Mammary epithelial cell (primary cell): ENCODE measurements at regions of chr17 and their contacts with region 1.

Region 1: GRCh38 chr17:66799849-66800537 is 34.9 kb upstream of the CACNG5 start:
- DNase-seq: no peak
- H3K4me3 ChIP-seq: no peak overlapping the region
- H3K27ac ChIP-seq: no peak overlapping the region
- H3K4me1 ChIP-seq: no peaks in the 10 kb centered on the region
- H3K27me3 ChIP-seq: no peaks in the 10 kb centered on the region
- CTCF ChIP-seq: no peak

Region 2: GRCh38 chr17:66667491-66668030 is 132.4 kb before region 1 on chr17:
- CTCF ChIA-PET with region 1: no interaction called
- dilution Hi-C with region 1: no loop called
- in situ Hi-C with region 1: no loop called
- intact Hi-C with region 1: no loop called
- DNase-seq: no peak
- H3K4me3 ChIP-seq: no peak overlapping the region
- H3K27ac ChIP-seq: no peak overlapping the region
- H3K4me1 ChIP-seq: peaks cover 8% of the 10 kb centered on the region
- H3K27me3 ChIP-seq: no peaks in the 10 kb centered on the region
- CTCF ChIP-seq: no peak

Region 3: DNA sequence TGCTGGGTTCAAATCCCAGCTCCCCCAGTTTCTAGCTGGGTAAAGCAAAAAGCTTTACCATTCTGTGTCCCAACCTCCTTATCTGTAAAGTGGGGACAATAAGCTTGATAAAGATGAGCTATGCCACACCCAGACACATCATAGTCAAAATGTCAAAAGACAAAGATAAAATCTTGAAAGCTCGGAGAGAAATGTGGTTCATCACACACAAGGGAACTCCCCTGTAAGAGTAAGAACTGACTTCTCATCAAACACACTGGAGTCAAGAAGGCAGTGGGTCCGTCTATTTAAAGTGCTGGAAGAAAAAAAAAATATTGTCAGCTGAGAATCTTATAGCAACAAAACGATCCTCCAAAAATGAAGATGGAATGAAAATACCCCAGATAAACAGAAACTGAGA is 60.2 kb after region 1 on chr17:
- CTCF ChIA-PET with region 1: no interaction called
- dilution Hi-C with region 1: loop called (anchors 5 kb)
- in situ Hi-C with region 1: no loop called
- intact Hi-C with region 1: no loop called
- DNase-seq: no peak
- H3K4me3 ChIP-seq: no peak overlapping the region
- H3K27ac ChIP-seq: no peak overlapping the region
- H3K4me1 ChIP-seq: no peaks in the 10 kb centered on the region
- H3K27me3 ChIP-seq: peaks cover 2% of the 10 kb centered on the region
- CTCF ChIP-seq: no peak

Region 4: DNA sequence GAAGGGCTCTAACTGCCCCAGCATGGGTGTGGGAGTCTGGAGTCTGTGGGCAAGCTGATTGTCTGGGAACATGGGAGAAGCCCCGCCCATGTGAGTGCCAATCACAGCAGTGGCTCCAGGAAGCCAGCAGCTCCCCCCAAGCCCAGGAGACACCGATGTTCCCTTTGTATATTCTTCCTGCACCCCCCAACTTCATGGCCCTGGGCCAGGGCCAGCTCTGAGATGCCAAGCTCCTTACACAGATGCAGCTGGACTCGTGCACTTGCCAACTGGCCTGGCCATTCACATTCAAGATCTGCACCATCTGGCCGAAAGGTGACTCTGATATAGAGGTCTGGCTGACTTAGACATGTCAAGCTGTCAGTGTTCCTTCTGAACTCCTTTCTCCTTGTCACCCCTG is 85.4 kb after region 1 on chr17:
- CTCF ChIA-PET with region 1: no interaction called
- dilution Hi-C with region 1: no loop called
- in situ Hi-C with region 1: no loop called
- intact Hi-C with region 1: no loop called
- DNase-seq: no peak
- H3K4me3 ChIP-seq: no peak overlapping the region
- H3K27ac ChIP-seq: no peak overlapping the region
- H3K4me1 ChIP-seq: no peaks in the 10 kb centered on the region
- H3K27me3 ChIP-seq: no peaks in the 10 kb centered on the region
- CTCF ChIP-seq: no peak

Region 5: GRCh38 chr17:66944351-66945139 is 144.6 kb after region 1 on chr17:
- CTCF ChIA-PET with region 1: no interaction called
- dilution Hi-C with region 1: no loop called
- in situ Hi-C with region 1: no loop called
- intact Hi-C with region 1: no loop called
- DNase-seq: no peak
- H3K4me3 ChIP-seq: no peak overlapping the region
- H3K27ac ChIP-seq: no peak overlapping the region
- H3K4me1 ChIP-seq: peaks cover 4% of the 10 kb centered on the region
- H3K27me3 ChIP-seq: no peaks in the 10 kb centered on the region
- CTCF ChIP-seq: no peak

Region 6: GRCh38 chr17:66975604-66976384 is 175.8 kb after region 1 on chr17:
- CTCF ChIA-PET with region 1: no interaction called
- dilution Hi-C with region 1: no loop called
- in situ Hi-C with region 1: no loop called
- intact Hi-C with region 1: no loop called
- DNase-seq: peak; percentile 25
- H3K4me3 ChIP-seq: no peak overlapping the region
- H3K27ac ChIP-seq: no peak overlapping the region
- H3K4me1 ChIP-seq: peaks cover 12% of the 10 kb centered on the region
- H3K27me3 ChIP-seq: no peaks in the 10 kb centered on the region
- CTCF ChIP-seq: peak; percentile 37 to 55